HCT116 (cell line): ENCODE measurements at regions of chr19 and their contacts with region 1.

Region 1: DNA sequence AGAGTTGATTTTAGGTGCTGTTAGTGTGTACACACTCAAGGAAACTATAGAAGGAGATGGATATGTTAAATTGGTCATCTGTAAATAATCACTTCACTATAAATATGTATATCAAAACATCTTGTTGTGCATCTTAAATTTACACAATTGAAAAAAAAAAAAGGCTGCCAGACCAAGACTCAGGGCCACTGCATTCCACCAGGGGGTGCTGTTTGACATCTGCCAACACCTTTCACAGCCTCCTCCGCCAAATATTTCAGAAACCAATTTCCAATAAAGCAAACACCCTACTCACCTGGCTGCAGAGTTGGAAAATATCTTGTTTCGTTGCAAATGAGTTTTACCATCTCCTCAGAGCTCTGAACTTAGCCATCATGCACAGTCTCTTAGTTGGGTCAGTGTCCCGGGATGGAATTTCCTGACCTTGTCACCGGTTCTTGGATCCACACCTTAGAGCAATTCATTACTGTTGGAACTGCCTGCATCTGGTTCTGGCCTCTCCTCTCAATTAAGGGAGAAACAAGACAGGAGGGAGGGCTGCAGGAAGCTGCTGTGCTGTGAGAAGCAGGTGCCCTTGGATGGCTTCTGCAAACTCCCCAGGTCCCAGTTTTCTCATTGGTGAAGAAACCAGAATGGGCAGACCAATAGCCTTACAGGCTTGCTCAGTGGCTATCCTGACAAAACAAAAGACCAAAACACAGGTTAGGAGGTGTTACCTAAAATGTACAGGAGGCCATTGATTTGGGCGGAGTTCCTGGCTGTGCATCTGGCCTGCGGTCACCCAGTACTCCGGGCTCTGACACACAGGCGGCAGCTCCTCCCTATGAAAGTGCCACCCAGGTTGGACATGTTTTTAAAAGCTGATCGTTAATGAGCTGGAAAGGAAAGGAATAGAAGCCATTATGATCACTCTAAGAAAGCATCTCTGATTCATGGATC is 746.6 kb downstream of the UQCRFS1 start:
- DNase-seq: no peak
- ATAC-seq: no peak
- H3K4me3 ChIP-seq: no peak overlapping the region
- H3K27ac ChIP-seq: no peak overlapping the region
- H3K4me1 ChIP-seq: no peaks in the 10 kb centered on the region
- H3K27me3 ChIP-seq: no peaks in the 10 kb centered on the region
- CTCF ChIP-seq: peak in 2 of 3 experiments; percentile 52 to 57; a peak in 4 of 6 replicates
- POLR2A ChIP-seq: no peak
- RAD21 ChIP-seq: 0 out of 2 replicates have a peak, but pooled peaks have one; percentile 8

Region 2: GRCh38 chr19:28710278-28710677 is 243.9 kb after region 1 on chr19:
- CTCF ChIA-PET with region 1: no interaction called
- POLR2A ChIA-PET with region 1: no interaction called
- RAD21 ChIA-PET with region 1: no interaction called
- intact Hi-C with region 1: loop called (anchors 10 kb)
- DNase-seq: peak; percentile 34
- ATAC-seq: no peak
- H3K4me3 ChIP-seq: no peak overlapping the region
- H3K27ac ChIP-seq: no peak overlapping the region
- H3K4me1 ChIP-seq: no peaks in the 10 kb centered on the region
- H3K27me3 ChIP-seq: no peaks in the 10 kb centered on the region
- CTCF ChIP-seq: peak in 2 of 3 experiments; percentile 53 to 62; a peak in 4 of 6 replicates
- POLR2A ChIP-seq: no peak
- RAD21 ChIP-seq: peak; percentile 41